T-cell (primary cell): ENCODE measurements at regions of chr10 and their contacts with region 1.

Region 1: DNA sequence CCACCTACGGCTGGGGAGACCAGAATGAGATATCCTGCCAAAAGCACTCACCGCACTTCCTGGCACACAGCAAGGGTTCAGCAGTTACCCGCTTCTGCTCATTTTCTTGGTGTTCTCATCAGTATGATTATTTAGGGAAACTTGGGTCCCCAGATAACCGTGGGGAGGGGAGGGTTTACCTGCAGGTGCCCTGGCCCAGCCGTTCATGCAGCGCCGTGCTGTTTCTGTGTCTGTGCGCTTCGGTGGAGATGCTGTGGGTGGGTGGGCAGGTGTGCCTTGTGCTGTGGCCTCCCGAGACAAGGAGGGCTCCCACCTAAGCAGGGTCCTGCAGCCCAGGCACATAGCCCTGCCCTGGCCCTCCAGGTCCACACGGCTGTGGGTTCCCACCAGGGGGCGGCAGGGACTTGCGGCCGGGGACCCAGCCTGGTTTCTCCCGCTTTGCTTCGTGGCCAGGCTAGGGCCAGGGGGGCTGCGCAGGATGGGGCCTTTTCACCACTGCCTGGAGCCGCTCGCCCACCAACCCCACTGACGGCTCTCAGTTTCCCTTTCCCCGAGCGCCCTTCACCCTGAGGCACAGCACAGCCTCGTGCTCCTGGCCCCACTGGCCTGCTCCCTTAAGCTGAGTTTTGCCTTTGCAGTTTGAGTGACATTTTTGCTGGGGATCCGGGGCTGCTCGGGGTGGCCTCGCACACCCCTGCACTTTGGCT is 78.5 kb downstream of the LHPP start:
- DNase-seq: peak; percentile 27 to 79 (median 63)
- ATAC-seq: peak; percentile 75 to 93 (median 86)
- H3K4me3 ChIP-seq: no peak overlapping the region
- H3K4me3 Mint-ChIP-seq: no peak overlapping the region
- H3K27ac ChIP-seq: no peak overlapping the region
- H3K27ac Mint-ChIP-seq: no peak overlapping the region
- H3K4me1 ChIP-seq: peaks cover 5 to 23% of the 10 kb centered on the region in 2 experiments
- H3K4me1 Mint-ChIP-seq: peaks cover 4 to 15% (median 11%) of the 10 kb centered on the region in 3 donors
- H3K27me3 ChIP-seq: peaks cover 0 to 7% of the 10 kb centered on the region in 2 experiments
- H3K27me3 Mint-ChIP-seq: no peaks in the 10 kb centered on the region

Region 2: DNA sequence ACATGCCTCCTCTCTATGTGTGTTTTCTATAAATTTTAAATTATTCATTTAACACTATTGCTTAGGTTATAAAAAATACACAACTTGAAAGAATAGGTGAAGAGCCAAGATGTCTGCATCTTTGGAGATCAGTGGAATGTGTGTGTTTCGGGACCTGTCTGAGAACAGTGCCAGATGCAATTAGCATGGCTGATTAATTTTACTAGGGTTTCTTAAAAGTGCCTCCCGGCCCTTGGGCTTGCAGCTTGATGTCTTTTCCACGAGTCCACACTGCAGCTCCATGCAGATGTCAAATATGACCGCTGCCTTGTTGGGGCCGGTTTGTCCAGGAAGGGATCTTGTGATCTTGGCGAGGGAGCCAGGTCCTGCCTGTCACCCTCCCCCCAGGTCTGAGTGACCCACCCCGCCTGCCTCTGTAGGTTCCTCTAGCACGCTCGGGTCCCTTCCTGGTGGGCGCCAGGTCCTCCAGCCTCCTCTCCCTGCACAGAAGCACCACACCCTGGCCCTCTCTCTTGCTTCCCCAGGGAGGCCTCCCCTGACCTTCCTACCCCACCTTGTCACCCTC is 57.8 kb before region 1 on chr10:
- CTCF ChIA-PET with region 1: no interaction called
- POLR2A ChIA-PET with region 1: no interaction called
- DNase-seq: no peak
- ATAC-seq: no peak
- H3K4me3 ChIP-seq: no peak overlapping the region
- H3K4me3 Mint-ChIP-seq: no peak overlapping the region
- H3K27ac ChIP-seq: no peak overlapping the region
- H3K27ac Mint-ChIP-seq: no peak overlapping the region
- H3K4me1 ChIP-seq: no peaks in the 10 kb centered on the region
- H3K4me1 Mint-ChIP-seq: no peaks in the 10 kb centered on the region
- H3K27me3 ChIP-seq: no peaks in the 10 kb centered on the region
- H3K27me3 Mint-ChIP-seq: no peaks in the 10 kb centered on the region

Region 3: DNA sequence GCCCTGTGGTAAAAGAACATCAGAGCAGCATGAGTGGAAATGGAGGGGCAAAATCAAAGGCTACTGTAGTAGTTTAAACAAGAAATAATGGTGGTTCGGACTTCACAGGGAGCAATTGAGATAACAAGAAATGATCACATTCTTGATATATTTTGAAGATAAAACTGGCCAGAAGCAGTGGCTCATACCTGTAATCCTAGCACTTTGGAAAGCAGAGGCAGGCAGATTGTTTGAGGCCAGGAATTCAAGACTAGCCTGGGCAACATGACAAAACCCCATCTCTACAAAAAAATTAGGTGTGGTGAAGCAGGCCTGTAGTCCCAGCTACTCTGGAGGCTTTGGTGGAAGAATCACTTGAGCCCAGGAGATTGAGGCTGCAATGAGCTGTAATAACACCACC is 228.7 kb after region 1 on chr10:
- CTCF ChIA-PET with region 1: interaction called in 1 of 2 experiments, 11 read pairs
- POLR2A ChIA-PET with region 1: interaction called in 1 of 2 experiments, 8 read pairs
- DNase-seq: no peak
- ATAC-seq: no peak
- H3K4me3 ChIP-seq: no peak overlapping the region
- H3K4me3 Mint-ChIP-seq: no peak overlapping the region
- H3K27ac ChIP-seq: no peak overlapping the region
- H3K27ac Mint-ChIP-seq: no peak overlapping the region
- H3K4me1 ChIP-seq: no peaks in the 10 kb centered on the region
- H3K4me1 Mint-ChIP-seq: no peaks in the 10 kb centered on the region
- H3K27me3 ChIP-seq: no peaks in the 10 kb centered on the region
- H3K27me3 Mint-ChIP-seq: no peaks in the 10 kb centered on the region

Region 4: DNA sequence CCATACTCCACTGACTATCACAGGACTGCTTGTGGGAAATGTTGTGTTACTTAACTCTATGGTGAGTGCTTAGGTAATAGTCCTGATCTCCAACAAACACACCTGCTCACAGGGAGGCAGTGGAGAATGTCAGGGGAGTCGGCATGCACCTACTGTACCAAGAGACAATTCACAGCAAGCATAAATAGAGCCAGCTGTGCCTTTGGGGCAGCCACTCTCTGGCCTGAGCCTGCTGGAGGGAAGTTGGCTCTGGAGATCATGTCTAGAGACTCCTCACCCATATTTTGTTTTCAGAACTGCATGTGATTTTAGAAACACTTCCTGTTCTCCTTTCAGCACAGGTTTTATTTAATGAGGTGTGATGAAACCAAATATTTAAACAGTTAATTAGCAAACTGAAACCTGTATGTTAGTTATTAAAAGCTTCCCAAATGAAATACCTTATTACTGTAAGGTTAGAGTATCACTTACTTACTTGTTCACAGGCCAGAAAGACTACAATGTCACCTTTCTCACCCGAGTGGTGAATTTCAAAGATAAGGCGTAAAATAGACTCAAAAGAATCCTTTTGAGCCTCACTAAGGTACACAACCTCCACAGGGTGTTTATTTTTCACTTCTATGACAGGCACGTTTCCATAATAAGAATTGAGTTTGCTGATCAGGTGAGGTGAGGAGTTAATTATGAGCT is 1319.2 kb after region 1 on chr10:
- CTCF ChIA-PET with region 1: no interaction called
- POLR2A ChIA-PET with region 1: no interaction called
- DNase-seq: no peak
- ATAC-seq: no peak
- H3K4me3 ChIP-seq: no peak overlapping the region
- H3K4me3 Mint-ChIP-seq: no peak overlapping the region
- H3K27ac ChIP-seq: no peak overlapping the region
- H3K27ac Mint-ChIP-seq: no peak overlapping the region
- H3K4me1 ChIP-seq: no peaks in the 10 kb centered on the region
- H3K4me1 Mint-ChIP-seq: no peaks in the 10 kb centered on the region
- H3K27me3 ChIP-seq: no peaks in the 10 kb centered on the region
- H3K27me3 Mint-ChIP-seq: no peaks in the 10 kb centered on the region